Mucosa of descending colon (tissue), 3 donors: ENCODE measurements at regions of chr15 and their contacts with region 1.

Region 1: GRCh38 chr15:63522225-63522578 is 17.8 kb downstream of the USP3 start:
- DNase-seq: no peak
- ATAC-seq: no peak
- H3K4me3 ChIP-seq: no peak overlapping the region
- H3K4me1 ChIP-seq: peaks cover 26% of the 10 kb centered on the region
- CTCF ChIP-seq: no peak

Region 2: DNA sequence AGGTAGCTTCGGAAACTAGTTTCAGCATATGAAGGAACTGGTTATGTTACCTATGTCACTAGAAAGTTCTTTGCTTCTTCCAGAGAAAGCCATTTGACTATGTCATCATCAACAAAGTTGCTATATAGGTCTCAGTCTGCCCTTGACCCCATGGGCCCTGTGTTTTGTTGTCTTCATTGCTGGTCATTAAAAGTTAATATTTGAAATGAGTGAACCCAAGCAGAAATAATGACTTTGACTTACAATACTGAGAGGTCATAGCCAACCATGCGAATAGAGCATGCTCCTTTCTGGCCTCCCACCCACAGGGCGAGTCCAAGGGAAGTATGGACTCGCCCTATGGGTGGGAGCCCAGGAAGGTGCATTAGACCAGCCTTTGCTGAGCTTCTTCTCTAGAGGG is 203.9 kb before region 1 on chr15:
- intact Hi-C with region 1: loop called in 1 of 2 experiments (anchors 5 kb)
- DNase-seq: peak in 1 of 3 donors; percentile 21
- ATAC-seq: peak; percentile 14
- H3K4me3 ChIP-seq: no peak overlapping the region
- H3K4me1 ChIP-seq: no peaks in the 10 kb centered on the region
- CTCF ChIP-seq: no peak

Region 3: GRCh38 chr15:63891079-63891767 is 369.0 kb after region 1 on chr15:
- intact Hi-C with region 1: no loop called
- DNase-seq: peak; percentile 79 to 93 (median 88)
- ATAC-seq: peak; percentile 87
- H3K4me3 ChIP-seq: no peak overlapping the region
- H3K4me1 ChIP-seq: peaks cover 7% of the 10 kb centered on the region
- CTCF ChIP-seq: peak; percentile 51